Posterior cingulate gyrus (tissue), 11 donors: ENCODE measurements at regions of chr11 and their contacts with region 1.

Region 1: DNA sequence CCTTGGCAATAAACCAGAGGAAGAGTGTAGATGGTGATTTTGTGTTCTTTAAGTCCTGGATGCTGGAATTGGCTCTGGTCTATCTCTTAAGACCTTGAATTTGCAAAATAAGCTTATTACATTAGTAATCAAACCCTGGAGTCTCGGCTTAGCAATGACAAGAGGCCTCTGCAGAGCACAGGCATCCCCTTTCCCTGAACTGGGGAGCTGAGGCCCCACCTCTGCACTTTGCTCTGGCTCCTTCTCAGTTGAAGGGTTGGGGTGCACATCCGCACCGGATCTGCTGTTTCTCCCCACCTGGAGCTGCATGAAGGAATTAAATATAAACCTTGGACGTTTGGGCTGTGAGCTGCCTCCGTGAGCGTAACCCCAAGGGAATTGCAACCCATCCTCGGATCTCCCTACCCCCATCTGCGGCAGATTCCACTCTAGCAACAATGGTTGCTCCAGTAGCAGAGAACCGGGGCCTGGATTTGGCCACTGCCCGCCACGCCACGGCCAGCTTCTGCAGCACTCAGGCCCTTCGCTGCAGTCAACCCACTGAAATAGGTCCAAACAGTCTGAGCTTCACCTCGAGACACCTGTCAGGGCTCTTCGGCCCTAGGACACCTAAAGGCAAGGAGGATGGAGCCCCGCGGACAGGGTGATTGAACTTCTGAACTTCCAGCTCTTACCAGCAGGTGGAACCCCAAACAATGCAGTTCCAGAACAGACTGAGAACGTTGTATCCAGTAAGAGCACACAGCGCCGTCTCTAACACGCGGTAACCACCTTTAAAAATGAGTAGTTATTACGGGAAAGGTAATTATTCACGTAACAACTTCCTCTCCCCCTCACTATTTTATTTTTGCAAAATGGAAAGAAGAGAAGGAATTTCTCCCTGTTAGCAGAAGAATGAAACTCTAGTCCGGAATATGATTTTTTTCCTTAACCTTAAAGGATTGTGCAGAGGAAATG is 54.8 kb upstream of the CAPRIN1 start:
- DNase-seq: peak in 8 of 10 donors; percentile 31 to 89 (median 70)

Region 2: DNA sequence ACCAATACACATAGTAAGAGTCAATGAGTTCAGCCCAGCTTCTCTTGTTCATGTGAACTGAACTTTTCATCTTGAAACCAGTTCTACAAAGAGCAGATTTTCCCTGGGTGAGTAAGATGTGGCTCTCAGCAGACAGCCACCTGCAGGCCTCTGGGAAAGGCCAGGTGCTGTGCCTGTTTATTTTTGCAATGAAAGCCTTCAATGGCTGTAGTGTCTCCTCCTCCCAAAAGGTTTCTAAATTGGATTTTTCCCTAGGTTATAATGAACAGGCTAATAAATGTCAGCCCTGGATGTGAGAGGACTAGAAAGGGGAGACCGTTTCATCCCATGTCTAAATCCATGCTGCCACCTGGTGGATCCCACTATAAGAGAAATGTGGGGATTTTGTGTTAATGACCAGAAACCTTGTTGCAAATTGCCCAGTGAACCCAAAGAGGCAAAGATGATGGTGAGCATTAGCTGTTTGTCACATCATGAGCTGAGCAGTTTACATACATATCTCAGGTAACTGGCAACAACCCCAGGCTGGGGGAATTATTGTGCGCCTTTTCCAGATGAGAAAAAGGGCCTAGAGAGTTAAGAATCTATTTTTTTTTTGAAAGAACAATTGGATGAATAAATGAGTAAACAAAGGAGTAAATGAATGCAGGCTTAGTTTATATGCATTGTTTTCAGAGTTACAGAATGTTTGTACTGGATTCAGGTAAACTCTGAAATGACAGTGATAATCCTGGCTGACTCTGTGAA is 308.9 kb before region 1 on chr11:
- intact Hi-C with region 1: no loop called
- DNase-seq: peak in 4 of 10 donors; percentile 61 to 71 (median 66)

Region 3: DNA sequence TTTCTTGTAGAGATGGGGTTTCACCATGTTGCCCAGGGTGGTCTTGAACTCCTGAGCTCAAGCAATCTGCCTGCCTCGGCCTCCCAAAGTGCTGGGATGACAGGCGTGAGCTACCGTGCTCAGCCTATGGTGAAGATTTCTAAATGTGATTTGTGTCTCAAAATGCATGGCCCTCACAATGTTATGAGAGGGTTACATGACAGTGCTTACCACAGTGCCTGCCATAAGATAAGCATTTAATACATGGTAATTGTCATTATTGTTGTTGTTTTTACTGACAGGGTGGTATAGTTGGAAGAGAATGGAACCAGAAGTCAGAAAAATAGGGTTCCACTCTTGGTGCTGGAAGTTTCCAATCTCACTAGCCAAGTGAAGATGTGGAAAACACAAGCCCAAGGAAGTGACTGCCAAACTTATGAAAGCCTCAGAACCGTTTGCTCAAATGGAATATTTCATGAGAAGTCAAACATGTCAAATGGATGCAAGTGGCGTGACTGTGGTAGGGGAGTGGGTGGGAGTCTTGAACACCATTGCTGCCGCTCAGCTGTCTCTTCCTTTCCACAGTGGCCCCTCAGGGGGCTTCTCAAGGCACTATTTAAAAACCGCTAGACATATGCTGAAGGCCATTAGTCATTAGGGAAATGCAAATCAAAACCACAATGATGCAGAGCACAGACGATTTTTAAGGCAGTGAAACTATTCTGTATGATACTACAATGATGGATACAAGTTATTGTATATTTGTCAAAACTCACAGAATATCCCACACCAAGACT is 75.8 kb before region 1 on chr11:
- intact Hi-C with region 1: no loop called
- DNase-seq: no peak

Region 4: GRCh38 chr11:33959855-33960400 is 36.8 kb before region 1 on chr11:
- intact Hi-C with region 1: no loop called
- DNase-seq: no peak

Region 5: DNA sequence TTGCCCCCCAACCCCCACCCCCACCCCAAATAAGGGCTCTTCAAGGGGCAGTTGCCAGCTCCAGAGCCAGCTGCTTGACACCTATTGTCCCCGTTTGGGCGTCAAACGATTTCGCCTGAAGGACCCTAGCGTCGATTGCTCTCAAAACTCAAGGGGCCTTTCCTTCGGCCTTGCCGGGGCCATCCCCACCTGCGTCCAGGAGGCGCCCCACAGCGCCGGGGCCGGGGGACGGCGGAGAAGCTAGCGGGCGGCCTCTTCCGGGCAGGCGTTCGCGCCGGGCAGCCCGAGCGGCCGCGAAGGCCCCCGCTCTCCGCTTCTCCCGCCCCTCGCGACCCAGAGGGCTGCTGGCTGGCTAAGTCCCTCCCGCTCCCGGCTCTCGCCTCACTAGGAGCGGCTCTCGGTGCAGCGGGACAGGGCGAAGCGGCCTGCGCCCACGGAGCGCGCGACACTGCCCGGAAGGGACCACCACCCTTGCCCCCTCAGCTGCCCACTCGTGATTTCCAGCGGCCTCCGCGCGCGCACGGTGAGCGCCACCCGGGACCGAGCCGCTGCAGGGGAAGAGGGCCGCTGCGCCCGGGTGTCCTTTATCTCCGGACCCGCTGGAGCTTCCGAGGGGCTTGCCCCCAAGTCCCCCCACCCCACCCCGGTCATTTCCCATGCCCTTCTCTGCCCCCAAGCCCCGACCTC is 54.7 kb after region 1 on chr11 and contains the start of gene CAPRIN1:
- intact Hi-C with region 1: loop called (anchors 5 kb)
- DNase-seq: peak; percentile 74 to 98 (median 86)

Region 6: GRCh38 chr11:34105079-34105956 is 108.5 kb after region 1 on chr11 and contains the start of gene NAT10:
- intact Hi-C with region 1: loop called (anchors 2 kb)
- DNase-seq: peak; percentile 91 to 99 (median 93)

Region 7: DNA sequence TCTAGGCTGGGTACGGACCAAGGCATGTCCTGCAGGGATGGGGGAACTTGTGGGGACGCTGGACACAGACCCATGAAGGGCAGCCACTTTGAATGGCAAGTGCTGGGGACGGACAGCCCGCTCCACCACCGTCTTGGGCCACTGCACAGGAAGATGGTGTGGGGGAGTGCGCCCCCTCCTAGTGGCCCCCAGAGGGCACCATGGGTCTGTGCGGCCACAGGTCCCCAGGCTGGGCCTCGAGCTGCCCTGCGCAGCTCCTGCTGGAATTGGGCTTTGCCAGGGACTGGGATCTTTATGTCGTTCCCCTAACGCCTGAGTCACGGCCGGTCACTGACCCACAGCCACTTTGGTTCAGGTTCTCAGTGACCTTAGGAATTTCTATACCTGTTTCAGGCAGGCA is 153.0 kb after region 1 on chr11:
- intact Hi-C with region 1: no loop called
- DNase-seq: peak in 1 of 10 donors; percentile 82

Region 8: GRCh38 chr11:34174412-34175041 is 177.8 kb after region 1 on chr11:
- intact Hi-C with region 1: loop called (anchors 2 kb)
- DNase-seq: peak; percentile 70 to 98 (median 87)